AG04449 (cell line): ENCODE measurements at regions of chr2 and their contacts with region 1.

Region 1: DNA sequence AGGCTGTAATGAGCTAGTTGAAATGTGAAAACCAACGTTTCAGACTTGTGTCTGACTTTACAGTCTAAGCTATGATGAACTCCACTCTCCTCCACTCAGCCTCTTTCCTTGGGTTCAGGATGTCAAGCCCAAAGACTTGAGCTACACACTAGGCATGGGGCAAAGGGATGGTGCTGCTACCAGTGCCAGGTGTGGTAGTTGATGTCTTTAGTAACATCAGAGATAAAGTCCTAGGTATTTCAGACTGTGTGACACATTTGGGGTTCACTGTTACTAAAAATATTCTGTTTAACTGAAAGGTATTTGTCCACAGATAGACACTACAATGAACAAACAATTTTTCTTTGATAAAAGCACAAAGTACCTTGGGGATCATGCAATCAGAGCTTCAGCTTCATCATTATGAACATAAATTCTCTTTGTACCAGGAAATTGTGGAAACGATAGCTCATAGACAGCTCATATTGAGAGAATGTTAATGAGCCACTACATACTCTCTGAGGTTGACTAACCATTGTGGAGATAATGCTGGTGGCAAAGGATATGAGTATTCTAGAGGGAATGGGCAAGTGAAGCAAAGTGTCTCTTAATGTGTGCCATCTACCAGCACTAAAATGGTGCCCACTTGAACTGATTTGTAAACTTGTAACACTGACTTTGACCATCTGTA is 253.7 kb upstream of the THUMPD2 start:
- DNase-seq: peak; percentile 85
- H3K4me3 ChIP-seq: no peak overlapping the region
- CTCF ChIP-seq: no peak

Region 2: DNA sequence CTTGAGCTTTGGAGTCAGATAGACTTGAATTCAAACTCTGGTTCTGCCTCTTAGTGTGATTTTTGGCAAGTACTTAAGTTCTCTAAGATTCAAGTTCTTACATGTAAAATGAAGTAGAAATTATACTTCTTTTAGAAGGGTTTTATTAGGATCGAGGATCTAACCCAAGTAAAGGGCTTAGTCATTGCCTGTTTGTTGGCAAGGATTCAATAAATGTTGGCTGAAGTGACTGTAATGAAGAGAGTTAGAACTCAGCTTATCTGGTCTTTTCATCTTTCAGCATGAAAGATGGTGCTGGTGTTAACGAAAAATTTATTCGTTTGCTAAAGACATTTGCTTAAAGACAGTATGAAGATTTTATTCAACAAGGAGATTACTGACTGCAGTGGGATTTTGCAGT is 62.2 kb after region 1 on chr2:
- CTCF ChIA-PET with region 1: no interaction called
- POLR2A ChIA-PET with region 1: interaction called, 27 read pairs
- DNase-seq: no peak
- H3K4me3 ChIP-seq: no peak overlapping the region
- CTCF ChIP-seq: no peak

Region 3: DNA sequence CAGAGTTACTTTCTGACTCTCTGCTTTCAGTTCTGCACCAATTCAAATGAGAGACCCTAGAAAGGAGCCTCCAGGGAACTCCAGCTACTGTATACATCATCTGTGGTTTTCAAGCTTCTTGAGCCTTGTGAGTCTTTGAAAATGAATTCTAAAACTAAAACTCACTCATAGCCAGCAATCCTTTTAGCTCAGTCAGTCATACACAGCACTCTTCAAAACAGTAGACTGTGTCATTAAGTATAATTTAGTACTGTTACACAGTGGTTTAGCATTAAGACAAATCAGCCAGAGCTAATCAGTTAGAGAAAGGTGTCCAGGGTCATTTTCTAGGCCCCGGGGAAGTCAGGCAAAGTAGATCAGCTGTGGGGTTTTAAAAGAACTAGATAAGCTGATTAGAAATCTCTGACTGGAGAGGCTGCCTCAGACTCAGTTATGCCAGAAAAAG is 68.4 kb after region 1 on chr2:
- CTCF ChIA-PET with region 1: interaction called, 3 read pairs
- POLR2A ChIA-PET with region 1: interaction called, 27 read pairs
- DNase-seq: peak; percentile 87
- H3K4me3 ChIP-seq: no peak overlapping the region
- CTCF ChIP-seq: no peak

Region 4: GRCh38 chr2:40127890-40128557 is 95.2 kb after region 1 on chr2:
- CTCF ChIA-PET with region 1: no interaction called
- POLR2A ChIA-PET with region 1: interaction called, 15 read pairs
- DNase-seq: peak; percentile 92
- H3K4me3 ChIP-seq: no peak overlapping the region
- CTCF ChIP-seq: no peak